Cardiac septum (tissue), 1 donor: ENCODE measurements at regions of chr3 and their contacts with region 1.

Region 1: GRCh38 chr3:188262913-188263683 is 109.1 kb downstream of the LPP start:
- DNase-seq: no peak

Region 2: GRCh38 chr3:187968883-187969580 is 294.1 kb before region 1 on chr3:
- intact Hi-C with region 1: loop called (anchors 10 kb)
- DNase-seq: no peak

Region 3: GRCh38 chr3:188052169-188053030 is 210.7 kb before region 1 on chr3:
- intact Hi-C with region 1: loop called (anchors 5 kb)
- DNase-seq: peak; percentile 87

Region 4: DNA sequence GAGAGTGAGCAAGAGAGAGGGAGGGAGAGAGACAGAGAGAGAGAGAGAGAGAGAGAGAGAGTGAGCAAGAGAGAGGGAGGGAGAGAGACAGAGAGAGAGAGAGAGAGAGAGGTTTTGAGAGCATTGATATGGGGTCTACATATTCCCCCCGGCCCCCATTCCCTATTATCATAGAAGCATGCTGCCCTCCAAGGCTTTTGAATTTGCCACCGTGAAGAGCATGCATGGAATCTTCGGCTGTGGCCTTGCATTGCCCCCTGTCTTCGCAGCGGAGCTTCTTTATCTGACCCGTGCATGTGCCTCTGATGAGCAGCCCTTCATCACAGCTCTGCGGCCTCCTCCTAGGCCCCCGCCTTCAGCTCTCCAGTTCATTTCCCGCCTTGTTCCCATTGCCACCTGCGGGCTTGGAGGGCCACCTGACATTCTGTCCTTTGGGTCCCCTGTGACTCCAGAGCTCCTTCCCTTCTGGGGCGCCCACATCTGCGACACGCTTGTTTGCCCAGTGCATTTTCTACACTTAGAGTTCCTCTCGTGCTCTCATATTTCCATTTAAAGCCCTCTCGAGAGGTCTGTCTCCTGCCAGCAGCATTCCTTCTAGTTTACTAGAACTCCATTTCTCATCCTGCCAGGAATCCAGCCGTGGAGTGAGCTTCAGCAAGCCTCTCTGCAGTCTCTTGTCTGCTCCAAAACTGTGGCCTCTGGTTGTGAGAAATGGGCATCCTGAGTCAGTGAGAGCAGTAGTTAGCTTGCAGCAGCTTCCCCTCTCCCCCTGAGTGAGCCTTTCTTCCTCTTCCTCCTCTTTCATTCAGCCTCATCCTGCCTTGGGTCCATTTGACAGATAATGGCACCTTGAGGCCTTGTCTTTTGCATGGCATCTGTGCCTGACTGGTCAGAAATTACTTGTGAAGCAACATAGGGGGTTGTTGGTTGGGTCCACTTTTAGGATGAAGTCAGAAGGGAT is 83.8 kb before region 1 on chr3:
- intact Hi-C with region 1: loop called (anchors 5 kb)
- DNase-seq: no peak